ENCODE measurements at regions of chr20 and their contacts with region 1.

Region 1: DNA sequence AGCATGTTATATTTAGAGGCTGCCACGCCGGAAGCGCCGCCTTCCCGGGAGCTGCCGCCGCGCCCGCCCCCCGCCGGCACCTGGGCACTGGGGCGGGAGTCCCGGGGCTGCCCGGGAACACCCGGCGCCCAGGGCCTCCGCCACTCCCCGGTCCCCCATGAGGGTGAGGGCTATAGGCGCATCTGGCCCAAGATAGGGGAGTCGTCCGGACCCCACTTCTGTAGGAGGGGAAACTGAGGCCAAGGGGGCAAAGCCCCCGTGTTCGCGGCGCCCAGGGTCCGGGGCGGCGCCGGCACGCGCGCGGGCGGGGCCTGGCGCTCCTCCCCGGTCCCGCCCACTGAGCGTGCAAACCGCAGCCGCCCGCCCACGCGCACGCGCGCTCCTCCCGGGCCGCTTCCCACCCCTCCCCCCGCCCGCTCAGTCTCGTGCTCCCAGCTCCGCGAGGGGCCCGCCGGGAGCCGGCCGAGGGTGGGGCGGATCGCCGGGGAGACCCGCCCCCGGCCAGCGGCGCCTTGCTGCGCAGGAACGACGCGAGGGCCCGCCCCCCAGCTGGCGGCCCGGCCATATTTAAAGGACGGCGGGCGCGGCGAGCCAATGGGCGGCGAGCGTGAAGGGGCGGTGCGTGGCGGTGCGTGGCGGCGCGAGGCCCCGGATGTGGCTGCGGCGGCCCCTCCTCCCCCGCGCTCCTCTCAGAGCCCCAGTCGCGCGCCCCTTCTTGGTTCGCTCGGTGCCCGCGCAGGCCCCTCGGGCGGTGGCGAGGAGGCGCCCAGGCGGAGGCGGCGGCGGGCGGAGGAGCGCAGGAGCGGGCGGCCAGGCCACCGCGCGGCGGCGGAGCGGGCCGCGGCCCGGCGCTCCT is at the start of gene LSM14B:
- DNase-seq: peak; percentile 95
- H3K4me3 Mint-ChIP-seq: peak within 1 kb of the TSS; percentile 87
- H3K27ac Mint-ChIP-seq: peak within 1 kb of the TSS; percentile 92
- H3K4me1 Mint-ChIP-seq: peaks cover 54% of the 10 kb centered on the region
- H3K27me3 Mint-ChIP-seq: no peaks in the 10 kb centered on the region
- total RNA-seq, gene LSM14B: 29.6 to 33.3 TPM

Region 2: DNA sequence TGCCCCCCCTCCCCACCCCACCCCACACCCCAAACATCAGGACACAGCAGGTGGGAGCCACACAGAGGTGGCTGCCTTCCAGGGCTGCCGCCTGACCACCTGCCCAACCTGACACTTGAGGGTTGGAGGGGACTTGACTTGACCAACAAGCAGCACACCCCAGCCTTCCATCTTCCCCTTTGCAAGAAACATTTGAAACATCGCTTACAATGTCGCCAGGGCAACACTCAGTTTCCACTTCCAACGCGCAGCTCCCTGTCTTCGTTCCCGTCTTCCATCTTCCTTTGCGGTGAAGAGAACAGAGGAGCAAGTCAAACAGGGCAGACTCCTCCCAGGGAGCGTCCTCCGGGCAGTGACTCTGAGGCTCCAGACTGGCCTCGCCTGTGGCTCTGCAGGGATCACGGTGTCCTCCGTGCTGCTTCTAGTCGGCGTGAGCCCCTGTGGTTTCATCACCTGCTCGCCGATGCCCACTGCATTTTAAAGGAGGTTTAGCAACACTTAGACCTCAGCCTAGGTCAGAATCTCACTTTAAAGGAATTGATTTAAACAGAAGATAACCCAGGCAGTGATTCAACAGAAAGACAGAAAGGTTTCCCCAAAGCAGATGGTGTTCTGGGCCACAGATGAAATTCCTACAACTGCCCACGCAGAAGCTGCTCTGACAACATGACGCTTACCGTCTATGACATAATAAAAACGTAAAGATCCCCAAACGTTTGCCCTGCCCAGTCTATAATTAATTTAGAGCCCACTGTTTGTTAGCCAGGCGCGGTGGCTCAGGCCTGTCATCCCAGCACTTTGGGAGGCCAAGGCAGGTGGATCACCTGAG is 187.1 kb before region 1 on chr20:
- CTCF ChIA-PET with region 1: no interaction called
- intact Hi-C with region 1: no loop called
- DNase-seq: no peak
- H3K4me3 Mint-ChIP-seq: no peak overlapping the region
- H3K27ac Mint-ChIP-seq: no peak overlapping the region
- H3K4me1 Mint-ChIP-seq: no peaks in the 10 kb centered on the region
- H3K27me3 Mint-ChIP-seq: peaks cover 3% of the 10 kb centered on the region

Region 3: GRCh38 chr20:62010551-62011402 is 111.2 kb before region 1 on chr20:
- CTCF ChIA-PET with region 1: interaction called, 11 read pairs
- intact Hi-C with region 1: loop called (anchors 5 kb)
- DNase-seq: peak; percentile 75
- H3K4me3 Mint-ChIP-seq: no peak overlapping the region
- H3K27ac Mint-ChIP-seq: peak overlapping the region; percentile 25
- H3K4me1 Mint-ChIP-seq: peaks cover 8% of the 10 kb centered on the region
- H3K27me3 Mint-ChIP-seq: no peaks in the 10 kb centered on the region

Region 4: GRCh38 chr20:62143118-62143973 is 21.3 kb after region 1 on chr20 and contains the starts of genes PSMA7 and SS18L1:
- CTCF ChIA-PET with region 1: interaction called, 8 read pairs
- intact Hi-C with region 1: loop called (anchors 1 kb)
- DNase-seq: peak; percentile 82
- H3K4me3 Mint-ChIP-seq: peak within 1 kb of the TSS; percentile 83
- H3K27ac Mint-ChIP-seq: peak within 1 kb of the TSS; percentile 87
- H3K4me1 Mint-ChIP-seq: peaks cover 55% of the 10 kb centered on the region
- H3K27me3 Mint-ChIP-seq: no peaks in the 10 kb centered on the region
- total RNA-seq, gene PSMA7: 287 to 288 TPM
- total RNA-seq, gene SS18L1: 14.5 to 18.0 TPM

Region 5: GRCh38 chr20:62182613-62183425 is 60.8 kb after region 1 on chr20 and contains the start of gene MTG2:
- CTCF ChIA-PET with region 1: no interaction called
- intact Hi-C with region 1: loop called (anchors 1 kb)
- DNase-seq: peak; percentile 96
- H3K4me3 Mint-ChIP-seq: peak within 1 kb of the TSS; percentile 87
- H3K27ac Mint-ChIP-seq: peak within 1 kb of the TSS; percentile 84
- H3K4me1 Mint-ChIP-seq: peaks cover 38% of the 10 kb centered on the region
- H3K27me3 Mint-ChIP-seq: no peaks in the 10 kb centered on the region
- total RNA-seq, gene MTG2: 34.3 to 36.4 TPM

Region 6: DNA sequence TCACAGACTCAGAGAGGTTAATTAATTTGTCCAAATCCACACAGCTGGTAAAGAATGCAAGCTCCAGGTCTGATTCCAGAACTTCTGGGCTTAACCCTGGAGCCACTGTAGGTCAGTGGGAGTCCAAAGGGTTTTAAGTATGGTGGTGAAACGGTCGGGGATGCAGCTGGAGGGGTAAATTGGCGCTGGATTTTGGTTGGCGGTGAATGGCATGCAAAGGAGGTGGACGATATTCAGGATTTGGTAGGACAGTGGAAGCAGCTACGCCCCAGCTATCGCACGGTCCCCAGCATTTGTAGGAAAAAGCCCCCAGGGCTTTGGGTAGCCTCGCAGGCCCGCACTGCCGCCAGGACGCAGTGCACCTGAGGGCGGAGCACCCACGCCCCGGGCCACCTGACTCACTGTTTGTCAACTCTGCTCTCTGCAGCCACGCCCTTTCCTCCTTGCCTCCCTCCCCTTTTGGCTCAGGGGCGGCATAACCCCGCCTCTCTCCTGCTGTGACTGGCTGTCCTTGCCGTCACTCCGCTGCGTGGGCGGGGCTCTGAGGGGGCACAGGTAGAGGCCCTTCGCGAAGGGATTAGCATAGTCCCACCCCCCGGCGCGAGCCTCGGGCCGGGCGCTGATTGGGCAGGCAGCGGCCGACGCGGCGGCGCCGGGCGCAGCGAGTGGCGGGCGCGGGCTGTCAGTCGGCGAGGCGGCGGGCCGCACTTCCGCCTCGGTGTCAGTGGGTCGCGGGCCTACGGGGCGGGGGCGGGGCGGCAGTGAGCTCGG is 116.0 kb after region 1 on chr20 and contains the start of gene OSBPL2:
- CTCF ChIA-PET with region 1: no interaction called
- intact Hi-C with region 1: loop called (anchors 1 kb)
- DNase-seq: peak; percentile 100
- H3K4me3 Mint-ChIP-seq: peak within 1 kb of the TSS; percentile 78
- H3K27ac Mint-ChIP-seq: peak within 1 kb of the TSS; percentile 79
- H3K4me1 Mint-ChIP-seq: peaks cover 28% of the 10 kb centered on the region
- H3K27me3 Mint-ChIP-seq: no peaks in the 10 kb centered on the region
- total RNA-seq, gene OSBPL2: 23.6 to 24.7 TPM

Region 7: DNA sequence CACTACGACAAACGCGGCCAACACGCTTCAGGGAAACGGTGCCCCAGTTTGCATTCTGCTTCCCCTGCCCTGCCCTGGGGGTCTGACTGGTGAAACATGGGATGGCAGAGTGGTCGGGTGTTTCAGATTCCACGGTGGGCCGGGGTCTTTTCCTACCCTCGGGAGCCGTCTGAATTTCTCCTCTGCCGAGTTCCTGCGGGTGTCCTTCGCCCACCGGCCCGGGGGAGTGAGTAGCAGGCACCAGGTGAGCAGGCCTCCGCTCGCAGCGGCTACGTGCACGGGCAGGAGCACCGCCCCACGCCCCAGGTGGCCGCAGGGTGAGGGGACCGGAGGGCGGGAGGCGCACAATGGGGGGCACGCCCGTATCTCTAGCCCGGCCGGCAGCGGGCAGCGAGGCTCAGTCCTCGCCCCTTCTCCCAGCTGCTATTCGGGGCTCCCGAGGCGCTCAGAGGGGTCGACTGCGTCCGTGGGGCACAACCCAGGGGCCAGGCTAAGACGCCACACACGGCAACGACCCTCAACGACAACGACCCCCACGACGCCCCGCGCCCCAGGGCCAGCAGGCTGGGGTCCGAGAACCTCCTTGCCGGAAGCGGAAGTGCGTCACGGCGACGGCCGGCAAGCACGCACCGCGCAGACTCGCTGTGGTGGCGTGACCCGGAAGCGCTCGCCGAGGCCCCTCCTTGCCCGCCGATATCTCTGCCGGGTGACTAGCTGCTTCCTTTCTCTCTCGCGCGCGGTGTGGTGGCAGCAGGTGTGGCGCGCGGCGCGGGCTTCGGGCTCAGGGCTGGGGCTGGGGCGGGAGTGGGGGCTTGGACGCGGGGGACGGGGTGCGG is 264.6 kb after region 1 on chr20 and contains the start of gene RPS21:
- CTCF ChIA-PET with region 1: no interaction called
- intact Hi-C with region 1: loop called (anchors 5 kb)
- DNase-seq: peak; percentile 94
- H3K4me3 Mint-ChIP-seq: peak within 1 kb of the TSS; percentile 87
- H3K27ac Mint-ChIP-seq: peak within 1 kb of the TSS; percentile 76
- H3K4me1 Mint-ChIP-seq: peaks cover 51% of the 10 kb centered on the region
- H3K27me3 Mint-ChIP-seq: no peaks in the 10 kb centered on the region
- total RNA-seq, gene RPS21: 2,995 to 3,072 TPM

Region 8: GRCh38 chr20:62623488-62624324 is 501.7 kb after region 1 on chr20:
- CTCF ChIA-PET with region 1: no interaction called
- intact Hi-C with region 1: loop called (anchors 5 kb)
- DNase-seq: peak; percentile 95
- H3K4me3 Mint-ChIP-seq: peak overlapping the region; percentile 74
- H3K27ac Mint-ChIP-seq: peak overlapping the region; percentile 94
- H3K4me1 Mint-ChIP-seq: peaks cover 23% of the 10 kb centered on the region
- H3K27me3 Mint-ChIP-seq: no peaks in the 10 kb centered on the region

Measured in activated naive CD4-positive, alpha-beta T cell treated with anti-CD3 and anti-CD28 coated beads for 36 hours (primary cell).